ENCODE measurements at regions of chr12 and their contacts with region 1.

Region 1: GRCh38 chr12:76031537-76032073 is at the start of gene PHLDA1:
- DNase-seq: peak; percentile 97
- ATAC-seq: peak; percentile 87
- H3K4me3 Mint-ChIP-seq: peak within 1 kb of the TSS; percentile 99
- H3K27ac Mint-ChIP-seq: peak within 1 kb of the TSS; percentile 96
- H3K4me1 Mint-ChIP-seq: peaks cover 37% of the 10 kb centered on the region
- H3K27me3 Mint-ChIP-seq: no peaks in the 10 kb centered on the region
- total RNA-seq, gene PHLDA1: 12.3 to 14.3 TPM

Region 2: GRCh38 chr12:75480469-75480949 is 551.1 kb before region 1 on chr12 and contains the start of gene GLIPR1:
- CTCF ChIA-PET with region 1: interaction called, 15 read pairs
- POLR2A ChIA-PET with region 1: interaction called, 3 read pairs
- intact Hi-C with region 1: loop called in 1 of 2 experiments (anchors 2 kb)
- DNase-seq: peak; percentile 86
- ATAC-seq: peak; percentile 83
- H3K4me3 Mint-ChIP-seq: peak within 1 kb of the TSS; percentile 93
- H3K27ac Mint-ChIP-seq: peak within 1 kb of the TSS; percentile 89
- H3K4me1 Mint-ChIP-seq: peaks cover 90% of the 10 kb centered on the region
- H3K27me3 Mint-ChIP-seq: no peaks in the 10 kb centered on the region
- total RNA-seq, gene GLIPR1: 8.7 to 9.3 TPM

Region 3: DNA sequence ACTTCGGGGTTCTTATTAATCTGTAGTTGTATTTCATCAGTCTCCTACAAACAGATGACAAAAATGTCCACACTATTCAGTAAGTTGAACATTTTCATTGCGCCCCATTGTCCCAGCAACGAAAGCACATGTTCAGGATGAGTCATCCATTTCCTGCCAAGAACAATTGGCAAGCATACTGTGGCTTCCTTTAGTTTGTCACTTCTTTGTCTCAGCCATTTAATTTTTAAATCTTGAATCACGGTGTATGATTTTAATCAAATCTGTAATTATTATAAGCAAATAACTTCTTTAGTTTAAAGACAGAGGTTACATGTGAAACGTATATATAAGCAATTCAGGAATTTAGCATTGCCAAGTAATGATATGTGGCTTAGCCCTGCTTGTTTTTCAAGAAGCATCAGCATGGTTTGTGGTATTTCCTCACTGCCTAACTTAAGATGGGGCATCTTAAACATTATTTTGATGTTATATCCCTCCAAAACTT is 308.8 kb before region 1 on chr12:
- CTCF ChIA-PET with region 1: no interaction called
- POLR2A ChIA-PET with region 1: no interaction called
- intact Hi-C with region 1: loop called in 1 of 2 experiments (anchors 10 kb)
- DNase-seq: peak; percentile 50
- ATAC-seq: peak; percentile 97
- H3K4me3 Mint-ChIP-seq: no peak overlapping the region
- H3K27ac Mint-ChIP-seq: peak overlapping the region; percentile 78
- H3K4me1 Mint-ChIP-seq: peaks cover 14% of the 10 kb centered on the region
- H3K27me3 Mint-ChIP-seq: peaks cover 5% of the 10 kb centered on the region

Region 4: DNA sequence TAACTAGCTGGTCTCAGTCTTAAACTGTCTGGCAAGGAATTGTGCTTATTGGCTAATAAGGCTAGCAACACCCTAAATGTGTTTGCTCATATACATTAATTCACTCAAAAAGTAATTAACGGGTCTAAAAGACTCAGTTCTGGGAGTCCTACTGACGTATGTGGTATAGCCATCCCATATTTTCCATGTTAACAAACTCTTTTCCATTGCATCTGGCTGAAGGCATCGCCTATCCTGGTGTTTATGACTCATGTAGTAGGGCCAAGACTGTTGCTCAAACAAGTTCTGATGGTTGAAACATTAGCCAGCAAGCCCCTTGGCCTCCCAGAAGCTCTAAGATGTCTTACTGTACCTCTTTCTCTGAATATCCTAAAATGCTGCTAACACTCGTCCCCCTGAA is 98.5 kb before region 1 on chr12:
- CTCF ChIA-PET with region 1: interaction called, 7 read pairs
- POLR2A ChIA-PET with region 1: interaction called, 8 read pairs
- intact Hi-C with region 1: loop called (anchors 1 kb)
- DNase-seq: no peak
- ATAC-seq: no peak
- H3K4me3 Mint-ChIP-seq: no peak overlapping the region
- H3K27ac Mint-ChIP-seq: peak overlapping the region; percentile 3
- H3K4me1 Mint-ChIP-seq: peaks cover 26% of the 10 kb centered on the region
- H3K27me3 Mint-ChIP-seq: peaks cover 17% of the 10 kb centered on the region

Region 5: DNA sequence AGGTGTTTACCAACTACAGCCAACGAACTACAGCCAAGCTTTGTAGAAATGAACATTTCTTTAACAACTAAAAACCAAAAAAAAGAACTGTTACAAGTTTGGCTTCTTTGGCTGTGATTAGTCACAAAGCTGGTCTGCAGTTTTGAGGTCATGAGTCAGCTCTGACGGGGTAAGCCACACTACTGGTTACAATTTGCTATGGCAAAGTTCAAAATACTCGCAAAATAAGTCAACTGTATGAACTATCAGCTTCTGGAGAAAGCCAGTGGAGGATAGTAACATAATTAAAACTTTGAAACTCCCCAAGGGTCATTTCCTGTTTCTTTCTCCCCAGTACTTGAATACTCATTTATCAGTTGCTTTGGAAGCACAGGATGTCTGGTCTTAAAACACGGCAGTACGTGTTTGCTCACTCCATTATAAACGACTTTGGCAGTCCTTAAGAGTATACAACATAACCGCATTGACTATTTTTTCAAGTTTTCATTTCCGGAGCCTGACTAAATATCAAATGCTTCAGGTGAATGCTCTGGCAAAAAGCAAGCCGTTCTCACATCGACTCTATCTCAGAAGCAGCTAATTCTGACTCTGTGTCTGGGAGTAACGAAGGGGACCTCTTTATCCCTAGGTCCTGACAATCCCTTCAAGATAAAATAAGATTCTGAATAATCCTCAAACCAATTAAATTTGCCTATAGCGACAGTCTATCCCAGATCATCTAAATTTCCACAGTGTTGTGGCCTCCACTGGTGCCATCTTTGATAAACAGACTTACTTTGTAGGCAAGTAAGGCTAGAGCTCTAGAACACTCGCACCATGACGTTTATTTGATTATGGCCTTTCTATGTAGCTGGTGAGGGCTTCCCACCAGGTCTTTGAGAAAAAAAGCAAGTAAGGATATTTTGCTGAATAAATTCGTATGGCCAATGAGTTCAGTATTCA is 10.6 kb before region 1 on chr12:
- CTCF ChIA-PET with region 1: interaction called, 19 read pairs
- POLR2A ChIA-PET with region 1: interaction called, 45 read pairs
- intact Hi-C with region 1: loop called (anchors 1 kb)
- DNase-seq: peak; percentile 88
- ATAC-seq: peak; percentile 79
- H3K4me3 Mint-ChIP-seq: peak overlapping the region; percentile 54
- H3K27ac Mint-ChIP-seq: peak overlapping the region; percentile 99
- H3K4me1 Mint-ChIP-seq: peaks cover 56% of the 10 kb centered on the region
- H3K27me3 Mint-ChIP-seq: peaks cover 1% of the 10 kb centered on the region

Region 6: DNA sequence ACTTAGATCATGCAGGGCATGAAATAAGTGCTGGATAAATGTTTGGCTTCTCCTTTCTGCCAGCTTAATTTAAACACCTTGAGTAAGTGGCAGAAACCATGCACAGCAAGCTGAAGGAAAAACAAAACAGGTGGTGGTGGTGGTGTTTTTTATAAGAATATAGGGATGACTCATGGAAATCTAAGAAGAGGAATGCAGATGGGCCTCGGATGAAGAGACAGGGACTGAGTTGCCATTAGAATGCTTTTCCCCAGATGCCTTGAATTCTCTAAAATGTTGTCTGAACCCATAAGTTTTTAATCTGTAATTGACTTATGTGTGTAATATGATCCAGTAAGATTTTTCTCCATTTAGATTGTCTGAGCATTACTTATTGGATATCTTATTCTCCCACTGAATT is 639.2 kb after region 1 on chr12:
- CTCF ChIA-PET with region 1: no interaction called
- POLR2A ChIA-PET with region 1: no interaction called
- intact Hi-C with region 1: no loop called
- DNase-seq: no peak
- ATAC-seq: no peak
- H3K4me3 Mint-ChIP-seq: no peak overlapping the region
- H3K27ac Mint-ChIP-seq: no peak overlapping the region
- H3K4me1 Mint-ChIP-seq: peaks cover 8% of the 10 kb centered on the region
- H3K27me3 Mint-ChIP-seq: no peaks in the 10 kb centered on the region